ENCODE measurements at regions of chr19 and their contacts with region 1.

Region 1: DNA sequence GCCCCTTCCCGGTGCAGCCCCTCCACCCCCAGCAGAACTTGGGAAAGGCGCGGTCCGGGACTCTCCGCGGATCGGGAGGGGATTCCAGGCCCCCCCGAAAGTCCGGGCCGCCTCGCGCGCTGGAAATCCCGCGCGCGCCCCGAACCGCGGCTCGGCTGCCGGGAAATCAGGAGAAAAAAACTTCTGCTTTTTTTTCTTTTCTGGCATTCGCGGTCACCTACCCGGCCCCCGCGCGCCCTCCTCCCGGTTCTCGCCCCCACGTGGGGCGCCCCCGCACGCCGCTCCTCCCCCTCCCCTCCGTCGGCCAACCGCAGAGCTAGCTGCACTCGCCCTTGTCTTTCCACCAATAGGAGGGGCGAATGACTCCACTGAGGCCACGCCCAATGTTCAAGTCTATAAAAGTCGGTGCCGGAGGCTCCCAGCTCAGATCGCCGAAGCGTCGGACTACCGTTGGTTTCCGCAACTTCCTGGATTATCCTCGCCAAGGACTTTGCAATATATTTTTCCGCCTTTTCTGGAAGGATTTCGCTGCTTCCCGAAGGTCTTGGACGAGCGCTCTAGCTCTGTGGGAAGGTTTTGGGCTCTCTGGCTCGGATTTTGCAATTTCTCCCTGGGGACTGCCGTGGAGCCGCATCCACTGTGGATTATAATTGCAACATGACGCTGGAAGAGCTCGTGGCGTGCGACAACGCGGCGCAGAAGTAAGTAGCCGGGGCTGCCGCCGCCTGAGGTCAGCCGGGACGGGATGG is at the start of gene GADD45B:
- DNase-seq: peak; percentile 96 to 98 (median 96)
- H3K4me3 ChIP-seq: peak within 1 kb of the TSS; percentile 71 to 97
- H3K4me3 Mint-ChIP-seq: peak within 1 kb of the TSS; percentile 99 to 100 (median 100)
- H3K27ac ChIP-seq: peak within 1 kb of the TSS; percentile 76
- H3K27ac Mint-ChIP-seq: peak within 1 kb of the TSS; percentile 95 to 99 (median 97)
- H3K4me1 ChIP-seq: peaks cover 25% of the 10 kb centered on the region
- H3K4me1 Mint-ChIP-seq: peaks cover 6 to 36% (median 14%) of the 10 kb centered on the region in 4 donors
- H3K27me3 ChIP-seq: no peaks in the 10 kb centered on the region
- H3K27me3 Mint-ChIP-seq: no peaks in the 10 kb centered on the region
- total RNA-seq, gene GADD45B: 88.2 to 88.3 TPM

Region 2: DNA sequence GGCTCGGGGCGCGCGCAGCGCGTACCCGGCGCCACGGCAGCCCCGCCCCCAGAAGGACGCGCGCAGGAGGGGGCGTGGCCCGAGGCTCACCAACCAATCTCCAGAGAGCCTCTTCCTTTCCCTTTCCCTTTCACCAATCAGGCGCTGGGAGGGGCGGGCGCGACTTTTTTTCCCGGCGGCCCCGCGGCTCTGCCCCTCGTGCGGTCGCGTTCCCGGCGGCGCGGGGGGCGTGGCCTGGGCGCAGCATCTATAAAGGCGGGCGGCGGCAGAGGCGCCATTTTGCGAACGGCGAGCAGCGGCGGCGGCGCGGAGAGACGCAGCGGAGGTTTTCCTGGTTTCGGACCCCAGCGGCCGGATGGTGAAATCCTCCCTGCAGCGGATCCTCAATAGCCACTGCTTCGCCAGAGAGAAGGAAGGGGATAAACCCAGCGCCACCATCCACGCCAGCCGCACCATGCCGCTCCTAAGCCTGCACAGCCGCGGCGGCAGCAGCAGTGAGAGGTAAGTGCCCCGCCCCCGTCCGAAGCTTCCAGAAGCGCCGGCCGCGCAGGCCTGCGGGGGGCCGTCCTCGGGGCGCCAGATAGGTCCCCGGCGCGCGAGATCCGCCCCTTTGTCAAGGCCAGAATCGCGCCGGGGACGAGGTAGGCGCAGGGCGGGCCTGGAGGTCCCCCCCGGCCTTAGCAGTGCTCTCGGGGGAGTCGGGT is 206.5 kb before region 1 on chr19:
- CTCF ChIA-PET with region 1: interaction called, 3 read pairs
- POLR2A ChIA-PET with region 1: interaction called, 10 read pairs
- intact Hi-C with region 1: no loop called
- DNase-seq: peak; percentile 98 to 99 (median 99)
- H3K4me3 ChIP-seq: peak overlapping the region; percentile 52 to 83
- H3K4me3 Mint-ChIP-seq: peak overlapping the region; percentile 88 to 95 (median 94)
- H3K27ac ChIP-seq: peak overlapping the region; percentile 91
- H3K27ac Mint-ChIP-seq: peak overlapping the region; percentile 86 to 99 (median 94)
- H3K4me1 ChIP-seq: peaks cover 52% of the 10 kb centered on the region
- H3K4me1 Mint-ChIP-seq: peaks cover 17 to 48% (median 34%) of the 10 kb centered on the region in 4 donors
- H3K27me3 ChIP-seq: no peaks in the 10 kb centered on the region
- H3K27me3 Mint-ChIP-seq: no peaks in the 10 kb centered on the region

Region 3: GRCh38 chr19:2385053-2385721 is 90.7 kb before region 1 on chr19:
- CTCF ChIA-PET with region 1: no interaction called
- POLR2A ChIA-PET with region 1: no interaction called
- intact Hi-C with region 1: no loop called
- DNase-seq: peak in 1 of 5 donors; percentile 6
- H3K4me3 ChIP-seq: no peak overlapping the region
- H3K4me3 Mint-ChIP-seq: peak overlapping the region in 1 of 8 donors; percentile 20
- H3K27ac ChIP-seq: no peak overlapping the region
- H3K27ac Mint-ChIP-seq: no peak overlapping the region
- H3K4me1 ChIP-seq: no peaks in the 10 kb centered on the region
- H3K4me1 Mint-ChIP-seq: peaks cover 0 to 3% (median 0%) of the 10 kb centered on the region in 4 donors
- H3K27me3 ChIP-seq: no peaks in the 10 kb centered on the region
- H3K27me3 Mint-ChIP-seq: peaks cover 3 to 5% of the 10 kb centered on the region in 2 donors

Region 4: GRCh38 chr19:2446271-2446779 is 29.6 kb before region 1 on chr19:
- CTCF ChIA-PET with region 1: no interaction called
- POLR2A ChIA-PET with region 1: no interaction called
- intact Hi-C with region 1: no loop called
- DNase-seq: no peak
- H3K4me3 ChIP-seq: no peak overlapping the region
- H3K4me3 Mint-ChIP-seq: peak overlapping the region in 5 of 8 donors; percentile 28 to 62 (median 39)
- H3K27ac ChIP-seq: no peak overlapping the region
- H3K27ac Mint-ChIP-seq: peak overlapping the region in 3 of 7 donors; percentile 25 to 76 (median 66)
- H3K4me1 ChIP-seq: peaks cover 5% of the 10 kb centered on the region
- H3K4me1 Mint-ChIP-seq: peaks cover 6 to 16% (median 9%) of the 10 kb centered on the region in 4 donors
- H3K27me3 ChIP-seq: no peaks in the 10 kb centered on the region
- H3K27me3 Mint-ChIP-seq: no peaks in the 10 kb centered on the region

Region 5: DNA sequence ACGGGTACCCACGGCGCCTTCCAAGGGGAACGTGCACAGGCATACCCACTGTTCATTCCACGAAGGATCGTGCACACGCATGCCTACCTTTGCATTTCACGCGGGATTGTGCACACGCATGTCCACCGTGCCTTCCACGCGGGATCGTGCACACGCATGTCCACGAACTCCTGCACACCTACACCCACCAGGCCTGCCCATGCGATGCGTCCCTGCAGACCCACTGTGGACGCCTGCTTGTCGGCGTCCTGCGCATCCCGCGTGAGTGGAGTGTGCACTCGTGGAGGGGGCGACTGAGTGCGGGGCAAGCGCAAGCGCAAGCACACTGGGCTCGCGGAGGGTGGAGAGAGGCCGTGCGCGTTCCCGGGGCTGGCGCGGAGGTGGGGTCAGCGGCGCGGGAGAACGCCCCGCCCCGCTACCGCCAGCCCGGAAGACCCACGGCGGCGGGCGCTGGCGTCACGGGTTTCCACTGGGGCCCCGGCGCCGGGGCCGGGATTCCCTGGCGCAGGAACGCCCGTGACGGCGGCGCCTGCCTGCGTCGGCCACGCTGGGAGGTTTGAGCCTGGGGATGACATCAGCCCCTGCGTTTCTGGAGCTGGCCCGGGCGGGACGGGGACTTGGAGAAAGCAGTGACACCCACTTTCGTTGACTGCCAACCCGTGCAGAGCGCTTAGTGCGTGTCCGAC is 18.7 kb after region 1 on chr19:
- CTCF ChIA-PET with region 1: interaction called, 4 read pairs
- POLR2A ChIA-PET with region 1: interaction called, 206 read pairs
- intact Hi-C with region 1: loop called (anchors 2 kb)
- DNase-seq: peak; percentile 31 to 80 (median 33)
- H3K4me3 ChIP-seq: peak overlapping the region; percentile 34 to 77
- H3K4me3 Mint-ChIP-seq: peak overlapping the region; percentile 70 to 85 (median 80)
- H3K27ac ChIP-seq: peak overlapping the region; percentile 56
- H3K27ac Mint-ChIP-seq: peak overlapping the region in 6 of 7 donors; percentile 43 to 74 (median 64)
- H3K4me1 ChIP-seq: peaks cover 23% of the 10 kb centered on the region
- H3K4me1 Mint-ChIP-seq: peaks cover 4 to 35% (median 16%) of the 10 kb centered on the region in 4 donors
- H3K27me3 ChIP-seq: peaks cover 11% of the 10 kb centered on the region
- H3K27me3 Mint-ChIP-seq: peaks cover 11 to 14% of the 10 kb centered on the region in 2 donors

Region 6: DNA sequence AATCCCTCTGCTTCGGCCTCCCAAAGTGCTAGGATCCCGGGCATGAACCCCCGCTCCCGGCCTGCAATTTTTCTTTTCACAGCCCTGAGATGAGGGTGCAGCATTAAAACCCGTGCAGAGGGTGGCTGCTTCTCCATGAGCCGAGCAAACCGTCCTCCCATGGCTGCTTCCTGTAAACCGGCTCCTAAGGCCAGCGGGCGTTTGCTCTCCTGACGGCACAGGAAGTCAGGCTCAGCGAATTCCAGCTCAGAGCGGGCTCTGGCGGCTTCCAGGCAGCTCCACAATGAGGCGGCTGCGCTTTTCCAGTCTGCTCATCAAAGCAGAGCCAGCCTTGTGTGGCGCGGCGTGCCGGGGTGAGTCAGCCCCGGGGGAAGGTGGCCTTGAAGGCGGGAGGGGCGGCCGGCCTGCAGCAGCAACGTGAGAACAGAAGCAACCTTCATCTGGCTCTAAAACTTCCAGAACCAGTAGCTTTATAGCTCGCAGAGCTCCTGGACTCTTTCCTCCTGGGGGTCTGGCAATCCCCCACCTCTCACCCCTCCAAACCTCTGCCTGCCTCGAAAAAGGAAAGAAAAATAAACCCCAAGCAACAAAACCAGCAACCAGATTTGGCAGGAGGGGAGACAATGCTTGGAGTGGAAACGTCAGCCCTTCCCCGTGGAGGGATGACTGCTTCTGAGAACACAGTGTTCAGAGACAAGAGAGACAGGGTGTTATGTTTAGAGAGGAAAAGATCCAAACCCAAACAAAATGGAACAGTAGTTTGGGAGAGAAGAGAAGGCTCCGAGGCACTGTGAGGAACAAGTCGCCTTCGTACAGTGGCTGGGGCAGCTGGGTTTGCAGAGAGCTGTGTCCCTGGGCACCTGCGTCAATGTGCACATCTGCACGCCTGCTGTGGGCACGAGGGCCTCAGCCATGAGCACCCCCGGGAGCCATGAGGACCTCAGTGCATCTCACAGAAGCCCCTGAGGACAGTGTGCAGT is 67.9 kb after region 1 on chr19:
- CTCF ChIA-PET with region 1: interaction called, 10 read pairs
- POLR2A ChIA-PET with region 1: interaction called, 119 read pairs
- intact Hi-C with region 1: no loop called
- DNase-seq: peak; percentile 11 to 75 (median 28)
- H3K4me3 ChIP-seq: peak overlapping the region in 1 of 2 donors; percentile 34
- H3K4me3 Mint-ChIP-seq: peak overlapping the region; percentile 55 to 85 (median 70)
- H3K27ac ChIP-seq: no peak overlapping the region
- H3K27ac Mint-ChIP-seq: peak overlapping the region in 2 of 7 donors; percentile 17 to 65
- H3K4me1 ChIP-seq: peaks cover 22% of the 10 kb centered on the region
- H3K4me1 Mint-ChIP-seq: peaks cover 2 to 17% (median 13%) of the 10 kb centered on the region in 4 donors
- H3K27me3 ChIP-seq: no peaks in the 10 kb centered on the region
- H3K27me3 Mint-ChIP-seq: no peaks in the 10 kb centered on the region

Region 7: DNA sequence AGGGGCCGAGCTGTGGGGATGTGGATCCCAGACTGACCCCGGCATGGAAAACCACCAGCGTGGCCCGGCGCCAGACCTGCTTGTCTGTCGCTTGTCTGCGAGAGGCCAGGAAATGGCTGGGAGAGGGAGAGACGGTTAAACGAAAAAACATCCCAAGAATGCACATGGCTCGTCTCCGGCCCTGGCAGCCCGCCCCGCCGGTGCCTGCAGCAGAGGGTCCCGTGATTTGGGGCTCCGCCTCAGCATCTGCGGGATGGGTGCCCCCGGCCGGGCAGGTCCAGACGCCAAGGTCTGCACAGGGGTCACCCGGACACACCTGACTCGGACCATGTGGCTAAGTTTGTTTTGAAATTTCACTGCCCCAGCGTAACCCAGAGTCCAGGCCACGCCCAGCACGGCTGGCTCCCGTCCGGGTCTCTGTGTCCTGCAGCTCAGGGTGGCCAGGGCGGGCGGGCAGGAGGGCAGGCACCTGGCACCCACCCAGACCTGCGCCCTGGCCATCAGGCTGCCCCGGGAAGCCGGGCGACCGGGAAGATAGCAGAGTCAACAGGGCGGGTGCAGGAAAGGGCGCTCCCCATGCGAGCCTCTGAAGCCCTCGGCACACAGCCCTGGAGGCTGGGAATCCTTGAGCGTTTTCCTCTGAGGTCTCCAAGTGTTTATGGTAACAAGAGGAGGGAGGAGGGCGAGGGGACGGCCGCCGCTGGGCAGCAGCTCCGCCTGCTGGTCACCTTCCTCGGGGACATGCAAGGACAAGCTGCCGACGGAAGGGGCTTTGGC is 103.2 kb after region 1 on chr19:
- CTCF ChIA-PET with region 1: interaction called, 41 read pairs
- POLR2A ChIA-PET with region 1: interaction called, 125 read pairs
- intact Hi-C with region 1: loop called (anchors 1 kb)
- DNase-seq: peak; percentile 48 to 59 (median 53)
- H3K4me3 ChIP-seq: peak overlapping the region in 1 of 2 donors; percentile 24
- H3K4me3 Mint-ChIP-seq: peak overlapping the region in 2 of 8 donors; percentile 60 to 62
- H3K27ac ChIP-seq: no peak overlapping the region
- H3K27ac Mint-ChIP-seq: peak overlapping the region in 2 of 7 donors; percentile 29 to 52
- H3K4me1 ChIP-seq: peaks cover 11% of the 10 kb centered on the region
- H3K4me1 Mint-ChIP-seq: peaks cover 0 to 12% (median 1%) of the 10 kb centered on the region in 4 donors
- H3K27me3 ChIP-seq: peaks cover 5% of the 10 kb centered on the region
- H3K27me3 Mint-ChIP-seq: peaks cover 4% of the 10 kb centered on the region in 2 donors

Region 8: DNA sequence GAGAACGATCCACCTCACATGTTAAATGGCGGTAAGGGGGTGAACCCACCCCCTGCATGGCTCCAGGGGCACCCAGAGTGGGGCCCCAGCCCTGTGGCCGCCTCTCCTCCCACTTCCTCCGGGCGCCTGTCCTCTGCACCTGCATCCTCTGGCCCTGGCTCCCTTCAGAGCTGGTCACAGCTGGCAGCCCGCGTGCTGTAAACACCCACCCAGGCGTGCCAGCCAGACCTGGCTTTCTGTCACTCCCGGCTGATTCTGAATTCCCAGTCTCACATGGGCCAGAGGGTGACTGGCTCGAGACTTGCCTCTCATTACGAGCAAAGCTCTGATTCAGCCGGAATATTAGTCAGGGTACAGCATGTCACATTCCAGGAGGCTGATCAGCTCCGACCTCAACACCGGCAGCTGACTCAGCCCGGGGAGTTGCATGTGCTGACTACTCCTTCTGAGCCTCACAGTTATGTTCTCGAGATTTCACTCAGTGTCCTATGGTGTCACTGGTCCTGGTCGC is 151.5 kb after region 1 on chr19:
- CTCF ChIA-PET with region 1: interaction called, 19 read pairs
- POLR2A ChIA-PET with region 1: interaction called, 231 read pairs
- intact Hi-C with region 1: no loop called
- DNase-seq: peak in 1 of 5 donors; percentile 38
- H3K4me3 ChIP-seq: no peak overlapping the region
- H3K4me3 Mint-ChIP-seq: no peak overlapping the region
- H3K27ac ChIP-seq: no peak overlapping the region
- H3K27ac Mint-ChIP-seq: peak overlapping the region in 4 of 7 donors; percentile 25 to 81 (median 70)
- H3K4me1 ChIP-seq: peaks cover 12% of the 10 kb centered on the region
- H3K4me1 Mint-ChIP-seq: peaks cover 11 to 51% (median 29%) of the 10 kb centered on the region in 4 donors
- H3K27me3 ChIP-seq: no peaks in the 10 kb centered on the region
- H3K27me3 Mint-ChIP-seq: no peaks in the 10 kb centered on the region

Measured in CD4-positive, alpha-beta memory T cell (primary cell).